ENCODE measurements at regions of chr22 and their contacts with region 1.

Region 1: GRCh38 chr22:46006379-46007002 is 29.5 kb upstream of the WNT7B start:
- DNase-seq: peak; percentile 98
- H3K4me3 ChIP-seq: peak overlapping the region in 2 of 4 donors; percentile 10 to 17
- H3K27ac ChIP-seq: peak overlapping the region; percentile 91 to 99 (median 96)
- H3K4me1 ChIP-seq: peaks cover 0 to 33% (median 27%) of the 10 kb centered on the region in 4 donors
- H3K27me3 ChIP-seq: no peaks in the 10 kb centered on the region
- CTCF ChIP-seq: peak; percentile 96 to 98 (median 97)
- EP300 ChIP-seq: no peak
- POLR2A ChIP-seq: no peak

Region 2: DNA sequence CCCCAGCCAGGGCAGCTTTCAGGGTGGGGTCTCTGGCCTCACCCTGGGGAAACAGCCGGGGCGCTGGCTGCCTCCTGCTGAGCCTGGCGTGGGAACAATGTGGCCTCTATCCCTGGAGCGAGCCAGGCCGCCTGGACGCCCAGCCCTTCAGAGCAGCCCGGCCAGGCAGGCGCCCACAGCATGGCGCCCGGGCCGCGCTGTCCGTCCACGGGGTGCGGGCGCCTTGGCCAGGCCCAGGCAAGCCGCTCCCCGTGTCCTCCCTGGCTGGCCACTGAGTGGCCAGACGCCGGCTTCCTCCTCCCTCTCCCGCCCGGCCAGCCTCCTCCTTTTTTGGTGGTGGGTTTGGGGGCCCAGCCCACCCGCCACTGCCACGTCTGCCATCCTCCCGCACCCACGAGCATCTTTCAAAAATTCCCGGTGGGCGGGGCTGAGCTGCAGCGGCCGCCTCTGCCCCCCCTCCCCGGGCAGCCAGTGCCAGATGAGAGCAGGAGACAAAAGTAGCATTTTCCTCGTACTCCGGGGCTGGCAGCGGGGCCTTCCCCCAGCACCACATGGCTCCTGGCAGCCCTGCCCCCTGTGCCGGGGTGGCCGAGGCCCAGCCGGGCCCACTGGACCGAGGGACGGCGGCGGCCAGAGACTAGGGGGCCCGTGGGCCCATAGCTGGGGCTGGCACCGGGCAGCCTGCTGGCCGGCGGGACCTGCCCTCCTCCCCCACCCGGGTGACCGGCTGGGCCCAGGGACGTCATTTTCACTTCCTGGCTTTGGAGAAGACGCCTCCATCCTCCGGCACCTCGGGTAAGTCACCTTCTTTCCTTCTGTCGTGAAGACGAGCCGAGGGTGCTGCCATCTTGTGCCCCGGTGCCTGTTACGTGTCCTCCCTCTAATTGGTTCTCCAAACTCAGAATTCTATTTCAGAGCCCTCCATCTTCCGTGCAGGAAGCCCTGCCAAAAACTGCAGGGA is 73.7 kb after region 1 on chr22:
- intact Hi-C with region 1: loop called (anchors 2 kb)
- DNase-seq: peak; percentile 95
- H3K4me3 ChIP-seq: peak overlapping the region; percentile 44 to 88 (median 60)
- H3K27ac ChIP-seq: peak overlapping the region; percentile 96 to 99 (median 98)
- H3K4me1 ChIP-seq: peaks cover 0 to 100% (median 96%) of the 10 kb centered on the region in 4 donors
- H3K27me3 ChIP-seq: no peaks in the 10 kb centered on the region
- CTCF ChIP-seq: no peak
- EP300 ChIP-seq: peak in 1 of 4 donors; percentile 29
- POLR2A ChIP-seq: peak; percentile 37 to 39